ENCODE measurements at regions of chr2 and their contacts with region 1.

Region 1: GRCh38 chr2:20446917-20447436 is at the start of gene RHOB:
- DNase-seq: peak; percentile 96
- H3K4me3 ChIP-seq: peak within 1 kb of the TSS; percentile 91
- H3K27ac ChIP-seq: peak within 1 kb of the TSS; percentile 47
- H3K27me3 ChIP-seq: no peaks in the 10 kb centered on the region
- CTCF ChIP-seq: no peak
- polyA plus RNA-seq, gene RHOB: 45.5 and 47.7 TPM in 2 replicates

Region 2: DNA sequence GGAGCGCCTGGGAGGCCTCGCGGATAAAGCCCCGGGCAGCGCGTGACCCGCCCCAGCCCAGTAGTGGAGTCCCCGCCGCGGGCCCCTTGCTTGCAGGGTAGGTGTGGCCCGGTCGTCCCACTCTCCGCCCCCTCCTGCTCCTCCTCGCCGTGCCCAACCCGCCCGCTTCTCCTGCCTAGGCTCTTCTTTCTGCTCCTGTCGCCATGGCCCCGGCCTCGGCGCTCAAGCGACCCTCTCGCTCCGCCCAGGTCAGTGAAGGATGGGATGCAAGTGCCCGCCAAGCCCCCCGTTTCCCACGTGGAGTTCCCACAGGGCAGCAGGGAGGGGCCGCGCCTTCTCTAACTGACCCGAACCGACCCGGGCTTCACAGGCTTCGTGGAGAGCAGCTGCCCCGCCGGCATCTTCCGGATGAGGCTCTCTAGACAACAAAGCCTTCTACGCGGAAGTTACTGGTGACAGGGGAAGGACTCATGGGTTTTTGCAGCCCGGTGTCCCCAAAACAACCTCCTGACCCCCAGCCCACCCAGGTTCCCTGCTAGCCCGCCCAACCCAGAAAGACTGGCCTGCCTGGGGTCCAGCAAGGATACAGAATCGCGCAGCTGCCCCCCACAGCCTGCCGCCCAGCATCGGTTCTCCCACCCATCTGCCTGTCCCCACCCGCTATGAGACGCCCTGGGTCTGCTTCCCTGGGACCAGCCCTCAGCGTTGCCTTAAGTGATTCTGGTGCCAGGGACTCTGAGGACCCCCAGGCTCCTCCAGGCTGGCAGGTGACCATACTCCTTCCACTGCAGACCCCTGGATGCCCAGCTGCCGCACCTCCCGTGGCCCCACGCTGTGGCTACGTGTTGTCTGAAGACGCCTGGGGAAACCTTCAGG is 578.0 kb before region 1 on chr2:
- CTCF ChIA-PET with region 1: no interaction called
- POLR2A ChIA-PET with region 1: no interaction called
- DNase-seq: no peak
- H3K4me3 ChIP-seq: peak overlapping the region; percentile 53
- H3K27ac ChIP-seq: no peak overlapping the region
- H3K27me3 ChIP-seq: peaks cover 13% of the 10 kb centered on the region
- CTCF ChIP-seq: no peak

Region 3: DNA sequence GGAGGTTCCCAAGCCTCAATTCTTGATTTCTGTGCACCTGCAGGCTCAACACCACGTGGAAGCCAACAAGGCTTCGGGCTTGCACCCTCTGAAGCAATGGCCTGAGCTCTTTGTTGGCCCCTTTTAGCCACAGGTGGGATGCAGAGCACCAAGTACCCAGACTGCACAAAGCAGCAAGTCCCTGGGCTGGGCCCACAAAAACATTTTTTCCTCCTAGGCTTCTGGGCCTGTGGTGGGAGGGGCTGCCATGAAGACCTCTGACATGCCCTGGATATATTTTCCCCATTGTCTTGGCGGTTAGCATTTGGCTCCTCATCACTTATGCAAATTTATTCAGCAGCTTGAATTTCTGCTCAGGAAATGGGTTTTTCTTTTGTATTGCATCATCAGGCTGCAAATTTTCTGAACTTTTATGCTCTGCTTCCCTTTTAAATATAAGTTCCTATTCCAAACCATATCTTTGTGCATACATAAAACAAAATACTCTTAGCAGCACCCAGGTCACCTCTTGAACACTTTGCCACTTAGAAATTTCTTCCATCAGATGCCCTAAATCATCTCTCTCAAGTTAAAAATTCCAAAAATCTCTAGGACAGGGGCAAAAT is 425.5 kb before region 1 on chr2:
- CTCF ChIA-PET with region 1: no interaction called
- POLR2A ChIA-PET with region 1: no interaction called
- DNase-seq: no peak
- H3K4me3 ChIP-seq: no peak overlapping the region
- H3K27ac ChIP-seq: no peak overlapping the region
- H3K27me3 ChIP-seq: no peaks in the 10 kb centered on the region
- CTCF ChIP-seq: no peak

Region 4: GRCh38 chr2:20411361-20411894 is 35.5 kb before region 1 on chr2:
- CTCF ChIA-PET with region 1: interaction called, 71 read pairs
- POLR2A ChIA-PET with region 1: interaction called, 25 read pairs
- DNase-seq: peak; percentile 38
- H3K4me3 ChIP-seq: no peak overlapping the region
- H3K27ac ChIP-seq: no peak overlapping the region
- H3K27me3 ChIP-seq: no peaks in the 10 kb centered on the region
- CTCF ChIP-seq: peak; percentile 88

Region 5: GRCh38 chr2:20479848-20480247 is 32.9 kb after region 1 on chr2:
- CTCF ChIA-PET with region 1: interaction called, 3 read pairs
- POLR2A ChIA-PET with region 1: interaction called, 10 read pairs
- DNase-seq: no peak
- H3K4me3 ChIP-seq: no peak overlapping the region
- H3K27ac ChIP-seq: no peak overlapping the region
- H3K27me3 ChIP-seq: peaks cover 10% of the 10 kb centered on the region
- CTCF ChIP-seq: no peak

Region 6: GRCh38 chr2:20542746-20543468 is 95.9 kb after region 1 on chr2:
- CTCF ChIA-PET with region 1: interaction called, 5 read pairs
- POLR2A ChIA-PET with region 1: interaction called, 22 read pairs
- DNase-seq: peak; percentile 41
- H3K4me3 ChIP-seq: no peak overlapping the region
- H3K27ac ChIP-seq: no peak overlapping the region
- H3K27me3 ChIP-seq: peaks cover 11% of the 10 kb centered on the region
- CTCF ChIP-seq: no peak

Region 7: GRCh38 chr2:20584637-20585321 is 137.8 kb after region 1 on chr2:
- CTCF ChIA-PET with region 1: interaction called, 3 read pairs
- POLR2A ChIA-PET with region 1: interaction called, 48 read pairs
- DNase-seq: peak; percentile 98
- H3K4me3 ChIP-seq: no peak overlapping the region
- H3K27ac ChIP-seq: peak overlapping the region; percentile 93
- H3K27me3 ChIP-seq: no peaks in the 10 kb centered on the region
- CTCF ChIP-seq: no peak

Region 8: DNA sequence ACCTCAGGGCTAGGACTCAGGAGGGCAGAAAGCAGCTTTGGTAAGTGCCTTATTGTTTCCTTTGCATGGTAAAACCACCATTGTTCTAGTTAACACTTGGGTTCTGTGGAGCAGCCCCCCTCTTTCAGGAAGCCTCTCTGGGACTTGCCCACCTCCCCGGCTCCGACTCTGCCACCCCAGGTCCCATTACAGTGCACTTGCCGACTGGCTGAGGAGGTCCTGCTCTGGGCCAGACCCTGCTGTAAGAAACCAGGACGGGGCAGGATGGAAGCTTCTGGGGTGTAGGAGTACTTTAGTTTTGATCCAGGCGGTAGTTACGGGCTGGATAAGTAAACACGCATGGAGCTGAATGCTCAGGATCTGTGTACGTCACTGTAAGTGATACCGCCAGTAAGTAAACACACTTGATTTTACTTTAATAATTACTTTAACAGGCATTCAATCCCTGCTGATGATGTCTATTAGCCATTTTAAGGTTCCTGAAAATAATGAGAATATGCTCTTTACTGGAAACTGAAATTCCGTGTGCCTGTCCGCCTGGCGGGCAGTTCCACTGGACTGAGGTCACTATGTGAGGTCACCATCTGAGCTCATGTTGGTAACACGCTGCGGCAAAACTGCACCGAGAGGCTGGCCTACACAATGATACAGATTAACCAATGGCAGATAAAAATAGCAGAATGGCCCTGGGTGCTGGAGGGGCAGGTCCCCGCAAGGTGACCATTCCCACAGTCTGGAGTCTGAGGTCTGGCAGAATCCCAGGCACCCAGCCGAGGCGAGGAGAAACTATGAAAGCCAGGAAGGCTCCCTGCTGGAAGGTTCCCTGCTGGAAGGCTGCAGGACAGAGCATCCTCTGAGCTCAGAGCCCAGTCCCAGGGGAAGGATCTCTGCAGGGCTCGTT is 178.8 kb after region 1 on chr2:
- CTCF ChIA-PET with region 1: interaction called, 4 read pairs
- POLR2A ChIA-PET with region 1: interaction called, 11 read pairs
- DNase-seq: no peak
- H3K4me3 ChIP-seq: no peak overlapping the region
- H3K27ac ChIP-seq: no peak overlapping the region
- H3K27me3 ChIP-seq: no peaks in the 10 kb centered on the region
- CTCF ChIP-seq: no peak

Region 9: DNA sequence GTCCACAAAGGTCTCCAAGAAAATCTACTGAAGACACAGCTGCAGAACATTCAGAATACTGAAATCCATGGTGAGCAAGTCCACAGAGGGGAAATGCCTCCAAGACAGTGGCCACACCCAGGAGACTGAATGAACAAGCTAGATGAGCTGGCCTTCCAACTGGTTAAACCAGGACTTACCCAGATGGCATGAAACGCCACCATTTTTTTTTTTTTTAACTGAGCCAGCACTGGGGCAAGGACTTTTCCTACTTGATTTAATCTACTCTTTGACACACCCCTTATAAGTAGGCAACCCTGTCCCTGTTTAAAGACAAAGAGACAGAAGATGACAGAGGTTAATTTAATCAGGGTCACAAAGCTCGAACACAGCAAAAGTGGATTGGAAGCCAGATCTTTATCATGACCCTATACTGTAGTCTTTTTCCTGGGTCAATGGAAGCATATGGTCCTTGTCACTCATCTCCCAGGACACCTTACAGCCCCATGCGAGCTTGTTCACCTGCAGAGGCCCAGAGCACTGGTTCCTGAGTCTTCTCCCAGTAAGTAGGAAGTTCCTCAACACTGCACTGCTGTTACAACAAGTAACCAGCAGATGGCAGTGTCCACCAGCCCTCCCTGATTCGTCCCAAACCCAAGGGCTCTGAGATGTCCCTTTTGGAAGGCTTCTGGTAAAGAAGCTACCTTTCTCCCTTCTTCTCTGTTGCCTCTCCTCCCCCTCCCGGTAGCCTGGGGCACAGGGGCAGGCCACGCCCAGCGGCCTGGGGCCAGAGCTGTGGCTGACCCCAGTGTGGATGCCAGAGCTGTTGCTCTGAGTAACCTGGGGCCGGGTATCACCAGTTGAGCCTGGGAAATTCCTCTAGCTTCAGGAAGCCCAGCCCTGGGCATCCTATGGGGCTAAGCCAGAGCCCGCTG is 214.3 kb after region 1 on chr2:
- CTCF ChIA-PET with region 1: interaction called, 16 read pairs
- POLR2A ChIA-PET with region 1: no interaction called
- DNase-seq: peak; percentile 61
- H3K4me3 ChIP-seq: no peak overlapping the region
- H3K27ac ChIP-seq: no peak overlapping the region
- H3K27me3 ChIP-seq: peaks cover 73% of the 10 kb centered on the region
- CTCF ChIP-seq: peak; percentile 98